ENCODE measurements at regions of chr18 and their contacts with region 1.

Region 1: GRCh38 chr18:9614401-9615279 is at the start of gene PPP4R1:
- DNase-seq: peak; percentile 78
- H3K4me3 Mint-ChIP-seq: peak within 1 kb of the TSS; percentile 95
- H3K27ac Mint-ChIP-seq: peak within 1 kb of the TSS; percentile 91
- H3K4me1 Mint-ChIP-seq: peaks cover 35% of the 10 kb centered on the region
- H3K27me3 Mint-ChIP-seq: no peaks in the 10 kb centered on the region
- total RNA-seq, gene PPP4R1: 39.3 to 44.5 TPM

Region 2: GRCh38 chr18:8704361-8705279 is 910.0 kb before region 1 on chr18:
- CTCF ChIA-PET with region 1: no interaction called
- POLR2A ChIA-PET with region 1: no interaction called
- intact Hi-C with region 1: loop called (anchors 10 kb)
- DNase-seq: peak; percentile 85
- H3K4me3 Mint-ChIP-seq: peak overlapping the region; percentile 84
- H3K27ac Mint-ChIP-seq: no peak overlapping the region
- H3K4me1 Mint-ChIP-seq: peaks cover 14% of the 10 kb centered on the region
- H3K27me3 Mint-ChIP-seq: peaks cover 46% of the 10 kb centered on the region

Region 3: GRCh38 chr18:9147440-9148202 is 467.0 kb before region 1 on chr18:
- CTCF ChIA-PET with region 1: no interaction called
- POLR2A ChIA-PET with region 1: no interaction called
- intact Hi-C with region 1: loop called (anchors 10 kb)
- DNase-seq: peak; percentile 25
- H3K4me3 Mint-ChIP-seq: peak overlapping the region; percentile 7
- H3K27ac Mint-ChIP-seq: peak overlapping the region; percentile 78
- H3K4me1 Mint-ChIP-seq: peaks cover 71% of the 10 kb centered on the region
- H3K27me3 Mint-ChIP-seq: no peaks in the 10 kb centered on the region

Region 4: DNA sequence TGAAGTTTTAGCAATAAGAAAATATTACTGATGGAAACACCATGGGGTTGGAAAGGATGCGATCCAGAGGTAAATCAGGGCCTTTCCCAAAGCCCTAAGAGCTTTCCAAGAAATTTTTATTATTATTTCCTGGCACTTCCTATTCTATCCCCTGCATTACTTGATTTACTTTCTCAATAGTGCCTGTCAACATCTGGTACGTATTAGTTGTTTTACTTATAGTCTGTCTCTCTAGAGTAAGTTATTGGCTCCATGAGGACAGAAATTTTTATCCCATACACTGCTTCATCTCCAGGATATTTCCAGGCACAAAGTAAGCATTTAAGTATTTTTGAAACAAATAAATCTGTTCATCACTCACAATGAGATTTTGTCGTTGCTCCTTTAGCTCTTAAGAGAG is 18.4 kb before region 1 on chr18:
- CTCF ChIA-PET with region 1: interaction called, 4 read pairs
- POLR2A ChIA-PET with region 1: interaction called, 3 read pairs
- intact Hi-C with region 1: loop called (anchors 2 kb)
- DNase-seq: no peak
- H3K4me3 Mint-ChIP-seq: no peak overlapping the region
- H3K27ac Mint-ChIP-seq: peak overlapping the region; percentile 21
- H3K4me1 Mint-ChIP-seq: peaks cover 27% of the 10 kb centered on the region
- H3K27me3 Mint-ChIP-seq: no peaks in the 10 kb centered on the region

Region 5: DNA sequence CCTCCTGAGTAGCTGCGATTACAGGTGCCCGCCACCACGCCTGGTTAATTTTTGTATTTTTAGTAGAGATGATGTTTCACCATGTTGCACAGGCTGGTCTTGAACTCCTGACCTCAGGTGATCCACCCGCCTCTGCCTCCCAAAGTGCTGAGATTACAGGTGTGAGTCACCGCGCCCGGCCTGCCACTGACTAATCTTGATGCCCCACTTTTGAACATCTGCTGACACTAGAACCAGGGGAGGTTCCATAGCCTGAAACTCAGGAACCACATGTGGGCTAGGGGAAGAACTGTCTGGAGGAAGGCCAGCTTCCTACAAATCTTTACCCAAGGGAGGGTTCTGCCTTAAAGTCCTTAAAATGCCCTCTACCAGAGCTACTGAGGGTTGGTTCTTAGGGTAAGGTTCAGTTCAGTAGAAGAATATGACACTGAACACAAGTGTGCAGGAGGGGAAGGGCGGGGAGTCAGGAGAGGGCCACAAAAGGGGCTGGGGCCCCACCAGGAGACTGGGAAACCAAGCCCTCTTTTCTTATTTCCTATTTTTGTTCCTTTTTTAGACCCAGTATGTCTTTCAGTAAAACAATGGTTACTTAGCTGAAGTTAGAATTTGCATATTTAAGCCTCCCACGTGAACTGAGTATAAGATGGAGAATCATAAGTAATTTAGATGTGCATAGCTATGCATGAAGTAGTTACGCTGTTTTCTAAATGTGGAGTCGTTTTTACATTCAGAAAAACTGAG is 87.1 kb after region 1 on chr18:
- CTCF ChIA-PET with region 1: no interaction called
- POLR2A ChIA-PET with region 1: no interaction called
- intact Hi-C with region 1: loop called (anchors 1 kb)
- DNase-seq: peak; percentile 66
- H3K4me3 Mint-ChIP-seq: no peak overlapping the region
- H3K27ac Mint-ChIP-seq: no peak overlapping the region
- H3K4me1 Mint-ChIP-seq: peaks cover 17% of the 10 kb centered on the region
- H3K27me3 Mint-ChIP-seq: peaks cover 40% of the 10 kb centered on the region

Region 6: GRCh38 chr18:10787293-10787901 is 1172.8 kb after region 1 on chr18:
- CTCF ChIA-PET with region 1: no interaction called
- POLR2A ChIA-PET with region 1: no interaction called
- intact Hi-C with region 1: loop called (anchors 2 kb)
- DNase-seq: peak; percentile 89
- H3K4me3 Mint-ChIP-seq: no peak overlapping the region
- H3K27ac Mint-ChIP-seq: no peak overlapping the region
- H3K4me1 Mint-ChIP-seq: peaks cover 2% of the 10 kb centered on the region
- H3K27me3 Mint-ChIP-seq: peaks cover 30% of the 10 kb centered on the region

Measured in activated CD4-positive, alpha-beta memory T cell treated with anti-CD3 and anti-CD28 coated beads for 36 hours (primary cell).